ENCODE measurements at regions of chr2 and their contacts with region 1.

Region 1: DNA sequence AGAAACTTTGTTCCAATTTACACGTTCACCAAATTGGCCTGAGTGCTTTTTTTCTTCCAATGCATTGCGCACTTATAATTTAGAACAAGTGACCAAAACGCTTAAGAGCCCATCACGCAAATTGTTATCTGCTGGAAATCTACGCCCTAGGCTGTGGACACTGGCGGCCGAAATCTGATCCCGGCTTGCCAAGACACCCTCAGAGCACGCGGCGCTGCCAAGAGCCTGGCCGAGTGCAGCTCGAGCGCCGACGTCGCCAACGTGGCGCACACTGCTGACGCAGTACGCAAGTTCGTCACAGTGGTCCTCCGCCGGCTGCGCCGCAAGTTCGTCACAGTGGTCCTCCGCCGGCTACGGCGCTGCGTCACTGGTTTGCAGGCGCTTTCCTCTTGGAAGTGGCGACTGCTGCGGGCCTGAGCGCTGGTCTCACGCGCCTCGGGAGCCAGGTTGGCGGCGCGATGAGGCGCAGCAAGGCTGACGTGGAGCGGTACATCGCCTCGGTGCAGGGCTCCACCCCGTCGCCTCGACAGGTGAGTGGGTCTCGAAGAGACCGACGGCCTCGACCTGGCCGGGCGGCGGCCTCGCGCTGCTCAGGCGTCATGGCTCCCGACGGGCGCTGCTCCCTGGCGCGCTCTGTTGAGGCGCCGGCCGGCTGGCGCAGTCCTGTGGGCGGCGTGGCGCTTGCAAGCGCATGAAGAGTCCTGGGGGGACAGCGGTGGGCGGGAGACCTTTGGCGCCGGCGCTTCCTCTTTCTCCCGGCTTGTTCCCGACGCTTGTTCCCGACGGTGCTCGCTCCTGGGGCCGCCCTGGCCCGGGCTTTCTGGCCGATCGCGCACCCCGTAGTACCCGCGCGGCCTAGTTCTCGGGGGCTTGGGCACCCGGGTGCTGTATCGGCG is at the start of gene RANBP2:
- DNase-seq: peak; percentile 96
- H3K4me3 ChIP-seq: peak within 1 kb of the TSS; percentile 64 to 98 (median 78)
- H3K27ac ChIP-seq: peak within 1 kb of the TSS; percentile 94 to 100 (median 99)
- H3K4me1 ChIP-seq: peaks cover 0 to 19% (median 6%) of the 10 kb centered on the region in 4 donors
- H3K27me3 ChIP-seq: no peaks in the 10 kb centered on the region
- CTCF ChIP-seq: no peak
- EP300 ChIP-seq: peak; percentile 20
- POLR2A ChIP-seq: peak; percentile 96
- total RNA-seq, gene RANBP2: 24.7 to 64.5 (median 52.5) TPM

Region 2: DNA sequence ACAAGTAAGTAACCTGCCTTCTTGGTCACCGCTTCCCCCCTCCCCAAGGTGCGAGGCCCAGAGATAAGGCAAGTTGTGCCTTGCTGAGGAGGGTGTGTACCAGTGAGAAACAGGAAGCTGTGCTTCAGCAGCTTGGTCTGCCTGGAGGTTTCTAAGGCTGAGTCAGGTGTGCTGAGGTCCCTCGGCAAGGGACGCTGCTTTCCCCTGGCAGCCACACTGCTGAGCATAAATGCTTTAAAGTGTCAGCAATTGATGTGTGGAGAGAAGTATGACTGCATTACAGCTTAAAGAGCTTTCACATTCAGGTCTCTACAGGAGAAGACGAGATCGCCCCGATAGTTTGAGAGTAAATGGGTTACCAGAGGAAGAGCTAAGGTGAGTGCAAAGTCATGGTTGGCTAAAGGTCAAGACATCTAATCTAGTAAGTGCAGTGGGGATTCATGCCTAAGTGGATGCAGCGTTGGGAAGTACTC is 98.3 kb before region 1 on chr2:
- in situ Hi-C with region 1: loop called in 1 of 4 experiments (anchors 25 kb)
- intact Hi-C with region 1: no loop called
- DNase-seq: peak; percentile 58
- H3K4me3 ChIP-seq: peak overlapping the region in 1 of 4 donors; percentile 29
- H3K27ac ChIP-seq: peak overlapping the region; percentile 34 to 62 (median 51)
- H3K4me1 ChIP-seq: peaks cover 8 to 71% (median 27%) of the 10 kb centered on the region in 4 donors
- H3K27me3 ChIP-seq: no peaks in the 10 kb centered on the region
- CTCF ChIP-seq: no peak
- EP300 ChIP-seq: no peak
- POLR2A ChIP-seq: peak; percentile 48

Region 3: DNA sequence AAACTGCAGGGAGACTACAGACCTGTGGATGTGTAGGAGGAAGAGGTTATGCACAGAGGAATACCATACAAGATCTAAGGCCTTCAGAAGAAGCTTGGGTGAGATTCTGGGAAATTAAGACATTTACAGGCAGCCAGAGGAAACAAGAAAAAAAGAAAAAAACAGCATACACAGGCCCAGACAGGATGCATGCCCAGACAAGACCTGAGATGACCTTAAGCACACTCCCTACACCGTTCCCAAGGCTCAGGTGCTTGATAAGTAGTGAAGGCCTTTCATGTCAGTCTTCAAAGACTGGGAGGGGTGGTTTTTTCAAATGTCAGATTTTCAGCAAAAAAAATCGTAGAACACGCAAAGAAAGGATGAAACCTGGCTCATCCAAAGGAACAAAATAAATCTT is 150.1 kb after region 1 on chr2:
- in situ Hi-C with region 1: no loop called
- intact Hi-C with region 1: no loop called
- DNase-seq: no peak
- H3K4me3 ChIP-seq: no peak overlapping the region
- H3K27ac ChIP-seq: no peak overlapping the region
- H3K4me1 ChIP-seq: no peaks in the 10 kb centered on the region
- H3K27me3 ChIP-seq: no peaks in the 10 kb centered on the region
- CTCF ChIP-seq: no peak
- EP300 ChIP-seq: no peak
- POLR2A ChIP-seq: no peak